Mammary epithelial cell (primary cell): ENCODE measurements at regions of chr3 and their contacts with region 1.

Region 1: GRCh38 chr3:125967138-125967537 is 1.8 kb upstream of the ROPN1B start:
- DNase-seq: no peak
- H3K4me3 ChIP-seq: no peak overlapping the region
- H3K27ac ChIP-seq: no peak overlapping the region
- H3K4me1 ChIP-seq: peaks cover 2% of the 10 kb centered on the region
- H3K27me3 ChIP-seq: peaks cover 4% of the 10 kb centered on the region
- CTCF ChIP-seq: no peak

Region 2: DNA sequence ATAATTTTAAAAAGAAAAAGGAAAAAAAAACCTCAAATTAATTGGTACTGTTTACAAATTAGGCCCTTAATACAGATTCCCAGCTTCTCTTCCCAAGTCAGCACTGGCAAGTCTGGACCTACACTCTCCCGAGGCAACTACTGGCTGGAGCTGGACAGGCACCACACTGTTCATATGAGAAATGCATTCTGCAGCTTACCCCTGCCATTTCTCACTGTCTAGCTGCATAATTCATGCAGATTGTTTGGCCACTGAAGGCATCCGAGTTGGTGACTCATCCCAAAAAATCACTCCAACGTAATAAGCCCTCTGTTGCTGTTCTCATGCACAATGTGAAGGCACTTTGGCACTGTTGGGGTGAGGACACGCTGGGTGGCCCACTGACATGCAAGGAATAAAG is 47.1 kb after region 1 on chr3:
- CTCF ChIA-PET with region 1: no interaction called
- dilution Hi-C with region 1: no loop called
- in situ Hi-C with region 1: no loop called
- intact Hi-C with region 1: no loop called
- DNase-seq: peak; percentile 41
- H3K4me3 ChIP-seq: no peak overlapping the region
- H3K27ac ChIP-seq: no peak overlapping the region
- H3K4me1 ChIP-seq: peaks cover 14% of the 10 kb centered on the region
- H3K27me3 ChIP-seq: no peaks in the 10 kb centered on the region
- CTCF ChIP-seq: no peak

Region 3: GRCh38 chr3:126083913-126084767 is 117.0 kb after region 1 on chr3 and contains the start of gene SLC41A3:
- CTCF ChIA-PET with region 1: no interaction called
- dilution Hi-C with region 1: no loop called
- in situ Hi-C with region 1: no loop called
- intact Hi-C with region 1: loop called (anchors 5 kb)
- DNase-seq: peak; percentile 81
- H3K4me3 ChIP-seq: peak within 1 kb of the TSS; percentile 63 to 78 (median 64)
- H3K27ac ChIP-seq: peak within 1 kb of the TSS; percentile 64
- H3K4me1 ChIP-seq: peaks cover 14% of the 10 kb centered on the region
- H3K27me3 ChIP-seq: no peaks in the 10 kb centered on the region
- CTCF ChIP-seq: peak in 1 of 2 donors; percentile 60
- total RNA-seq, gene SLC41A3: 25.1 to 43.0 TPM